Left lung (tissue), 14 donors: ENCODE measurements at regions of chr9 and their contacts with region 1.

Region 1: GRCh38 chr9:75866273-75866871 is 24.1 kb upstream of the PCSK5 start:
- DNase-seq: peak in 2 of 4 donors; percentile 38 to 46
- ATAC-seq: peak; percentile 68
- H3K4me3 ChIP-seq: no peak overlapping the region
- H3K27ac ChIP-seq: no peak overlapping the region
- H3K4me1 ChIP-seq: no peaks in the 10 kb centered on the region
- H3K27me3 ChIP-seq: no peaks in the 10 kb centered on the region
- CTCF ChIP-seq: peak; percentile 77 to 81

Region 2: DNA sequence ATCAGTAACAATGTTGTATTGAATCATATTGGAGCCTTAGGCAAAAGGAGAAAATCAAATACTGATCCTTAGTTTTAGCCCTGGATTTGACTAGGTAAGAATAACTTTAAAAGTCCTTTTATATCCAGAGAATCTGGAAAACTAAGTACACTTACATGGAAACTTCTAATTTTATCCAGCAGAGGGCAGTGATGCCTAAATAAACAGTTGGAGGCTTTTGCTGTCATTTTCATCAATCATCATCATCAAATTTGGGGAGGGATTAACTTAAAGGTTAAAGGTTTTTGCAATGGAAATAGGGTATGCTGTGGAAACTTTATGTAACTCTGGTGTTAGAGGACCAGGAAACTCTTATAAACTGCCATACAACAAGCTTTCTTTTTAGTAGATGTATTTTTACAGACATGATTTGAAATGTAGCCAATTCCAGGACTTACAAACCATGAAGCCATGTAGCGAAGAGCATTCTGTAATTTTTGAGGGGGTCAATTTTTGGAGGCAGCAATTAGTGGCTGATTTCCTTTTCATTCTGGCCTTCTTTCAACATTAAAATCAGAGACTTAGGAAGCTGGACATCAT is 665.4 kb before region 1 on chr9:
- intact Hi-C with region 1: loop called in 1 of 2 experiments (anchors 10 kb)
- DNase-seq: peak in 2 of 4 donors; percentile 32 to 36
- ATAC-seq: peak; percentile 85
- H3K4me3 ChIP-seq: no peak overlapping the region
- H3K27ac ChIP-seq: no peak overlapping the region
- H3K4me1 ChIP-seq: no peaks in the 10 kb centered on the region
- H3K27me3 ChIP-seq: no peaks in the 10 kb centered on the region
- CTCF ChIP-seq: peak; percentile 38 to 51

Region 3: GRCh38 chr9:75265525-75265972 is 600.8 kb before region 1 on chr9:
- intact Hi-C with region 1: loop called in 1 of 2 experiments (anchors 10 kb)
- DNase-seq: peak in 2 of 4 donors; percentile 36 to 56
- ATAC-seq: peak; percentile 86
- H3K4me3 ChIP-seq: no peak overlapping the region
- H3K27ac ChIP-seq: no peak overlapping the region
- H3K4me1 ChIP-seq: no peaks in the 10 kb centered on the region
- H3K27me3 ChIP-seq: no peaks in the 10 kb centered on the region
- CTCF ChIP-seq: peak; percentile 83 to 90